MCF 10A (cell line): ENCODE measurements at regions of chr1 and their contacts with region 1.

Region 1: GRCh38 chr1:237197470-237198425 is 155.8 kb downstream of the RYR2 start:
- DNase-seq: peak; percentile 42
- H3K4me3 Mint-ChIP-seq: no peak overlapping the region
- H3K27ac Mint-ChIP-seq: no peak overlapping the region
- H3K4me1 Mint-ChIP-seq: peaks cover 9% of the 10 kb centered on the region
- H3K27me3 Mint-ChIP-seq: no peaks in the 10 kb centered on the region
- CTCF ChIP-seq: no peak

Region 2: GRCh38 chr1:237164406-237165352 is 33.1 kb before region 1 on chr1:
- CTCF ChIA-PET with region 1: no interaction called
- POLR2A ChIA-PET with region 1: no interaction called
- intact Hi-C with region 1: loop called (anchors 5 kb)
- DNase-seq: no peak
- H3K4me3 Mint-ChIP-seq: no peak overlapping the region
- H3K27ac Mint-ChIP-seq: no peak overlapping the region
- H3K4me1 Mint-ChIP-seq: no peaks in the 10 kb centered on the region
- H3K27me3 Mint-ChIP-seq: peaks cover 3% of the 10 kb centered on the region
- CTCF ChIP-seq: no peak

Region 3: DNA sequence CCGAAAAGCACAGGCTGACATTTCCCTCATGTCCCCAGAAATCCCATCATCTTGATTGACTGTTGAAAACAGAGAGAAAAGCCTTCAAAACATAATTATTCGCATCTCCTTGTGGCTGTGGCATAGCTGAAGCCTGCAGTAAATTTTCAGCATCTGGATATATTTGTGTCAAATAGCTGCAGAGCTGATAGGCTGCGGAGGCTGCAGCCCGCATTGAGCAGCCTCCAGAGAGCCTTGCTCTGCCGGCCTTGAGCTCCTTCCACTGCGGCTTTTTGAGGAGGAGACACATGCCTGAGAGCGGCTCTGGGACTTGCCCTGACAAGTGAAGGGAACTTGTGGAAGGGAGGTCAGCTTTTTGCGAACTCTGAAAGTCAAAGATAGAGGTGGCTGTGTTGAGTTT is 11.1 kb before region 1 on chr1:
- CTCF ChIA-PET with region 1: interaction called, 9 read pairs
- POLR2A ChIA-PET with region 1: interaction called, 12 read pairs
- intact Hi-C with region 1: no loop called
- DNase-seq: peak; percentile 29
- H3K4me3 Mint-ChIP-seq: no peak overlapping the region
- H3K27ac Mint-ChIP-seq: no peak overlapping the region
- H3K4me1 Mint-ChIP-seq: peaks cover 12% of the 10 kb centered on the region
- H3K27me3 Mint-ChIP-seq: no peaks in the 10 kb centered on the region
- CTCF ChIP-seq: no peak